WTC11 (cell line): ENCODE measurements at regions of chr20 and their contacts with region 1.

Region 1: GRCh38 chr20:37564388-37565133 is 36.9 kb upstream of the BLCAP start:
- DNase-seq: peak; percentile 79
- ATAC-seq: peak; percentile 71
- H3K4me3 Mint-ChIP-seq: no peak overlapping the region
- H3K27ac Mint-ChIP-seq: no peak overlapping the region
- H3K4me1 Mint-ChIP-seq: peaks cover 43% of the 10 kb centered on the region
- H3K27me3 Mint-ChIP-seq: peaks cover 6% of the 10 kb centered on the region; the same call in 1 of the 2 replicates
- CTCF ChIP-seq: peak; percentile 98

Region 2: DNA sequence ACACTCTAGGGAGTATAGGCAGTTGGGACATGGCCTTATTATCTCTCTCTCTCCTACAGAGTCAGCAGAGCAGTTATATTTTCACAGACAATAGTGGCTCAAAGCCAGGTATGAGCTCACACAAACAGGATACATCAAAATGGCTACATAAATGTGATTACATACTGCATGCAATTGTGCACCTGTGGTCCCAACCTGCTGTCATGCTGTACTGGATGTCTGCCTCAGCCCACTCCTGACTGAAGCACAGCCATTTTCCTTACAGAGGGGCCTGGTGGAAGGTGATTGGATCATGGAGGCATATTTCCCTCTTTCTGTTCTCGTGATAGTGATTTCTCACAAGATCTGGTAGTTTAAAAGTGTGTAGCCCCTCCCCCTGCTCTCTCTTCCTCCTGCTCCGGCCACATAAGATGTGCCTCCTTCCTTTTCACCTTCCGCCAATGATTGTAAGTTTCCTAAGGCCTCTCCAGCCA is 576.0 kb before region 1 on chr20:
- CTCF ChIA-PET with region 1: no interaction called
- POLR2A ChIA-PET with region 1: no interaction called
- DNase-seq: no peak
- ATAC-seq: no peak
- H3K4me3 Mint-ChIP-seq: no peak overlapping the region
- H3K27ac Mint-ChIP-seq: no peak overlapping the region
- H3K4me1 Mint-ChIP-seq: peaks cover 10% of the 10 kb centered on the region
- H3K27me3 Mint-ChIP-seq: no peaks in the 10 kb centered on the region
- CTCF ChIP-seq: no peak

Region 3: GRCh38 chr20:37475252-37475651 is 89.3 kb before region 1 on chr20:
- CTCF ChIA-PET with region 1: no interaction called
- POLR2A ChIA-PET with region 1: no interaction called
- DNase-seq: no peak
- ATAC-seq: no peak
- H3K4me3 Mint-ChIP-seq: no peak overlapping the region
- H3K27ac Mint-ChIP-seq: no peak overlapping the region
- H3K4me1 Mint-ChIP-seq: no peaks in the 10 kb centered on the region
- H3K27me3 Mint-ChIP-seq: no peaks in the 10 kb centered on the region; the same call in 1 of the 2 replicates
- CTCF ChIP-seq: no peak

Region 4: DNA sequence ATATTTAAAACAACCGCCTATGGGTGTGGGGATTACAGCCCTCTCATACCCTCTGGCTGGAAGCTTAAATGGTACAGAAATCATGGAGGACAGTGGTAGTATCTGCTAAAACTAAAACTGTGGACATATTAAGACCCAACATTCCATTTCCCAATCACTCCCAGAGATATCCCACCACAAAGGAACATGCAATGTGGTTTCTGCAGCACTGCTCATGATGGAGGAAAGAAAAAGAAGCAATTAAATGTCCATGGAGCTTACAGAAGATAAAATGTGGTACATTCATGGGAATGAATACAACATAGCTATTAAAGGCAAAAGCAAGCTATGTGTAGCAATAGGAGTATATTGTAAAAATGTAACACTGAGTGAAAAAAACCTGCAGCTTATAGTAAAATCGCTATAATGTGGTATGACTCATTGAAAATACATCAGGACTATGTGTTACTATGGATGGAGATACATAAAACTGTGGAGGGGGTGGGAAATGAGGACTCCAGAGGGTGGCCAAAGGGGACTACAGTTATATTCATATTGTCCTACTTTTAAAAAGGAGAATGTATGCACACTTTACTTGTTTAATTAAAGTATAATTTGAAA is 66.4 kb before region 1 on chr20:
- CTCF ChIA-PET with region 1: no interaction called
- POLR2A ChIA-PET with region 1: no interaction called
- DNase-seq: no peak
- ATAC-seq: no peak
- H3K4me3 Mint-ChIP-seq: no peak overlapping the region
- H3K27ac Mint-ChIP-seq: no peak overlapping the region
- H3K4me1 Mint-ChIP-seq: 0 out of 2 replicates have a peak, but pooled peaks cover 2% of the 10 kb centered on the region
- H3K27me3 Mint-ChIP-seq: no peaks in the 10 kb centered on the region
- CTCF ChIP-seq: no peak

Region 5: GRCh38 chr20:37584238-37584807 is 19.8 kb after region 1 on chr20:
- CTCF ChIA-PET with region 1: interaction called, 14 read pairs
- POLR2A ChIA-PET with region 1: no interaction called
- DNase-seq: no peak
- ATAC-seq: no peak
- H3K4me3 Mint-ChIP-seq: no peak overlapping the region
- H3K27ac Mint-ChIP-seq: no peak overlapping the region
- H3K4me1 Mint-ChIP-seq: no peaks in the 10 kb centered on the region
- H3K27me3 Mint-ChIP-seq: peaks cover 4% of the 10 kb centered on the region
- CTCF ChIP-seq: no peak

Region 6: GRCh38 chr20:37622728-37623127 is 58.2 kb after region 1 on chr20:
- CTCF ChIA-PET with region 1: interaction called, 10 read pairs
- POLR2A ChIA-PET with region 1: no interaction called
- DNase-seq: no peak
- ATAC-seq: peak; percentile 86
- H3K4me3 Mint-ChIP-seq: no peak overlapping the region
- H3K27ac Mint-ChIP-seq: no peak overlapping the region
- H3K4me1 Mint-ChIP-seq: peaks cover 4% of the 10 kb centered on the region
- H3K27me3 Mint-ChIP-seq: peaks cover 13% of the 10 kb centered on the region
- CTCF ChIP-seq: no peak

Region 7: GRCh38 chr20:37749620-37750403 is 185.3 kb after region 1 on chr20:
- CTCF ChIA-PET with region 1: interaction called, 10 read pairs
- POLR2A ChIA-PET with region 1: no interaction called
- DNase-seq: no peak
- ATAC-seq: no peak
- H3K4me3 Mint-ChIP-seq: no peak overlapping the region
- H3K27ac Mint-ChIP-seq: no peak overlapping the region
- H3K4me1 Mint-ChIP-seq: peaks cover 17% of the 10 kb centered on the region
- H3K27me3 Mint-ChIP-seq: no peaks in the 10 kb centered on the region
- CTCF ChIP-seq: no peak

Region 8: DNA sequence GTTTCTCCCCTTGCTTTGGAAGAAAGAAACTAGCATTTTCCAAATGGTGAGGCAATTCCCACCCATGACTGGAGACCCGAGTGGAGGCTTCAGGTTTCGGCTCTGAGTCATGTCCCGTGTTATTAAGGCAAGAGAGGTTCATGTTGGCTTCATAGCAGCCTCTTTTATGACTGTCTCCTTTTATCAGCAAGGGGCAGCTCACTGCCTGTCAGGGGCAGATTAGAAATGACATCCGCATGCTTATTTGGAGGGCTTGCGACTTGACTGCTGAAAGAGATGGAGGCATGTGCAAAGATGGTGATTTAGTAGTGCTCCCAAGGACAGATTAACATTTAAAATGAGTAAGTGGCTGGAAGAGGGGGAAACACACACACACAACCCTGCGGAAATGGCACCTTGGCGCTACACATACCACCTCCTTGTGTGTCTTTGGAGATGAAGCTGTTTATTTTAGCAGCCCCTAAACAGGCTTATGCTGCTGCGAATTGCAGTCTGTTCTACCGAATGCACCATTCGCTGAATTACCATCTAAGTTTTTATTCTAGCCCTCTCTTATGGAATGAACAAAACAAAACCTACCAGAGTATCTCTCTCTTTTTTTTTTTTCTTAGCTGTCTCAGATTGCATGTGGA is 286.3 kb after region 1 on chr20:
- CTCF ChIA-PET with region 1: interaction called, 14 read pairs
- POLR2A ChIA-PET with region 1: no interaction called
- DNase-seq: no peak
- ATAC-seq: no peak
- H3K4me3 Mint-ChIP-seq: no peak overlapping the region
- H3K27ac Mint-ChIP-seq: no peak overlapping the region
- H3K4me1 Mint-ChIP-seq: peaks cover 19% of the 10 kb centered on the region
- H3K27me3 Mint-ChIP-seq: no peaks in the 10 kb centered on the region
- CTCF ChIP-seq: no peak

Region 9: GRCh38 chr20:37941332-37941731 is 376.8 kb after region 1 on chr20:
- CTCF ChIA-PET with region 1: interaction called, 10 read pairs
- POLR2A ChIA-PET with region 1: no interaction called
- DNase-seq: peak; percentile 50
- ATAC-seq: peak; percentile 59; the same call in 1 of the 2 replicates
- H3K4me3 Mint-ChIP-seq: no peak overlapping the region
- H3K27ac Mint-ChIP-seq: no peak overlapping the region
- H3K4me1 Mint-ChIP-seq: peaks cover 3% of the 10 kb centered on the region; the same call in 1 of the 2 replicates
- H3K27me3 Mint-ChIP-seq: no peaks in the 10 kb centered on the region
- CTCF ChIP-seq: peak; percentile 28; the same call in 1 of the 2 replicates